Astrocyte of the cerebellum (primary cell): ENCODE measurements at regions of chr18 and their contacts with region 1.

Region 1: DNA sequence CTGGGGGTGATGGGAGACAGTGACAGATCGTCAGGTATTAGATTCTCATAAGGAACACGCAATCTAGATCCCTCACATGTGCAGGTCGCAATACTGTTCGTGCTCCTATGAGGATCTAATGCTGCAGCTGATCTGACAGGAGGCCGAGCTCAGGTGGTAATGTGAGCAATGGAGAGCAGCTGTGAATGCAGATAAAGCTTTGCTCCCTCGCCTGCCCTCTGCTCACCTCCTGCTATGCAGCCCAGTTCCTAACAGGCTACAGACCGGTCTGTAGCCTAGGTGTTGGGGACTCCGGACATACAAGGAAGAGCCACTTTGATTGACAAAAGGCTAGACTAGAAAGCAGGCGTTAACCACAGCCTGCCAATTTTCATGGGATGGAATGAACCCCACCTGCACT is 183.6 kb upstream of the TMEM200C start:
- DNase-seq: no peak
- H3K4me3 ChIP-seq: no peak overlapping the region
- CTCF ChIP-seq: no peak

Region 2: DNA sequence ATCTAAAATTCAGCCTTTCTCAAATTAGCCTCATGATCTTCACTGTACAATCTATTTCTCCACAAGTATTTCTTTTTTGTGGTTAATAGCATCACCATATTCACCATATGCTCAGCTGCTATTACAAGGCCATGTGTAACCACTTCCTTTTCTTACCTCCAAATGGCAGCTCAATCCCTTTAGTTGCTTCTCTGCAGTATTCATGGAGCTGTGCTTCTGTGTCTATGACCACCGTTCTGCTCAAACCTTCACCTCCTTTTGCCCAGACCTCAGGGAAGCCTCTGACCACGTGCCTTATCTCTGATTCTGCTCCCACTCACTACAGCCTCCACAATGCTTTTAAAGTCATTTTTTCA is 56.8 kb before region 1 on chr18:
- in situ Hi-C with region 1: no loop called
- DNase-seq: peak; percentile 22
- H3K4me3 ChIP-seq: no peak overlapping the region
- CTCF ChIP-seq: no peak

Region 3: GRCh38 chr18:6158958-6159357 is 80.1 kb after region 1 on chr18:
- in situ Hi-C with region 1: loop called (anchors 5 kb)
- DNase-seq: no peak
- H3K4me3 ChIP-seq: no peak overlapping the region
- CTCF ChIP-seq: no peak